HCT116 (cell line): ENCODE measurements at regions of chr2 and their contacts with region 1.

Region 1: GRCh38 chr2:6929196-6929819 is 12.1 kb downstream of the RNF144A start:
- DNase-seq: no peak
- ATAC-seq: no peak
- H3K4me3 ChIP-seq: no peak overlapping the region
- H3K27ac ChIP-seq: no peak overlapping the region
- H3K4me1 ChIP-seq: no peaks in the 10 kb centered on the region
- H3K27me3 ChIP-seq: no peaks in the 10 kb centered on the region
- CTCF ChIP-seq: no peak
- POLR2A ChIP-seq: no peak
- RAD21 ChIP-seq: no peak

Region 2: GRCh38 chr2:6750411-6751158 is 178.7 kb before region 1 on chr2:
- CTCF ChIA-PET with region 1: no interaction called
- POLR2A ChIA-PET with region 1: no interaction called
- RAD21 ChIA-PET with region 1: no interaction called
- intact Hi-C with region 1: no loop called
- DNase-seq: no peak
- ATAC-seq: no peak
- H3K4me3 ChIP-seq: no peak overlapping the region
- H3K27ac ChIP-seq: no peak overlapping the region
- H3K4me1 ChIP-seq: no peaks in the 10 kb centered on the region
- H3K27me3 ChIP-seq: peaks cover 2% of the 10 kb centered on the region; the same call in 1 of the 2 replicates
- CTCF ChIP-seq: no peak
- POLR2A ChIP-seq: no peak
- RAD21 ChIP-seq: no peak

Region 3: DNA sequence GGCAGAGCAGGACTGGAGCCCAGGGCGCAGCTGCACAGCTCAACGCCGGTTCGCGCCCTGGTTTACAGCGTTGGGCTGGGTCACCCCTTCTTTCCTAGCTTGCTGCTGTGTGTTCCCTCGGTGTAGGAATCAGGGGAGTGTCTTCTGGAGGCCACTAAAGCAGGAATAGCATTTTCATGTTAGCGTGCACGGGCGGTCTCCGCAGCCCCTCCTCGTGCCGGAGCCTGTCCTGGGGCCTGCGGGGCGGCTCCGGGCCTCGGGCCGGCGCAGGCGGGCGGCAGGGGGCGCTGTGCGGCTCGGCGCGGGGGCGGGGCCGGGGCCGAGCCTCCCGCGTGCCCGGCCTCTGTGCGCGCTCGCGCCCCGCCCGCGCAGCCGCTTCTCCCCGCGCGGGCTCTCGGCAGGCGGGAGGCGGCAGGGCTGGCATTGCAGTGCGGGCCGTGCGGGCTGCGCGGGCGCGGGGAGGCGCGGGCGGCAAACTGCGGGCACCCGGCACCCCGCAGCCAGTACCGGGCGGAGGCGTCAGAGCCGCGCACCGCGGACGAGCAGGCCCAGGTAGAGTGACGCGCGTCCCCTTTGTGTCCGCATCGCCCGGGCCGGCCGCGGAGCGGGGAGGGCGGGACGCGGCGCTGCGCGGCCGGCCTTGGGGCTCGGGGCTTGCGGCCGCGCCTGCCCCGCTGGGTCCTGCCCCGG is 12.1 kb before region 1 on chr2 and contains the start of gene RNF144A:
- CTCF ChIA-PET with region 1: interaction called, 10 read pairs
- POLR2A ChIA-PET with region 1: no interaction called
- RAD21 ChIA-PET with region 1: no interaction called
- intact Hi-C with region 1: no loop called
- DNase-seq: no peak
- ATAC-seq: peak; percentile 90
- H3K4me3 ChIP-seq: peak within 1 kb of the TSS; percentile 36 to 49
- H3K27ac ChIP-seq: peak within 1 kb of the TSS; percentile 59; the same call in 1 of the 2 replicates
- H3K4me1 ChIP-seq: peaks cover 11 to 35% of the 10 kb centered on the region in 2 experiments; a peak in 3 of 4 replicates
- H3K27me3 ChIP-seq: no peaks in the 10 kb centered on the region
- CTCF ChIP-seq: peak in 2 of 3 experiments; percentile 29 to 35; a peak in 2 of 6 replicates
- POLR2A ChIP-seq: no peak
- RAD21 ChIP-seq: no peak
- total RNA-seq, gene RNF144A: 13.0 TPM

Region 4: DNA sequence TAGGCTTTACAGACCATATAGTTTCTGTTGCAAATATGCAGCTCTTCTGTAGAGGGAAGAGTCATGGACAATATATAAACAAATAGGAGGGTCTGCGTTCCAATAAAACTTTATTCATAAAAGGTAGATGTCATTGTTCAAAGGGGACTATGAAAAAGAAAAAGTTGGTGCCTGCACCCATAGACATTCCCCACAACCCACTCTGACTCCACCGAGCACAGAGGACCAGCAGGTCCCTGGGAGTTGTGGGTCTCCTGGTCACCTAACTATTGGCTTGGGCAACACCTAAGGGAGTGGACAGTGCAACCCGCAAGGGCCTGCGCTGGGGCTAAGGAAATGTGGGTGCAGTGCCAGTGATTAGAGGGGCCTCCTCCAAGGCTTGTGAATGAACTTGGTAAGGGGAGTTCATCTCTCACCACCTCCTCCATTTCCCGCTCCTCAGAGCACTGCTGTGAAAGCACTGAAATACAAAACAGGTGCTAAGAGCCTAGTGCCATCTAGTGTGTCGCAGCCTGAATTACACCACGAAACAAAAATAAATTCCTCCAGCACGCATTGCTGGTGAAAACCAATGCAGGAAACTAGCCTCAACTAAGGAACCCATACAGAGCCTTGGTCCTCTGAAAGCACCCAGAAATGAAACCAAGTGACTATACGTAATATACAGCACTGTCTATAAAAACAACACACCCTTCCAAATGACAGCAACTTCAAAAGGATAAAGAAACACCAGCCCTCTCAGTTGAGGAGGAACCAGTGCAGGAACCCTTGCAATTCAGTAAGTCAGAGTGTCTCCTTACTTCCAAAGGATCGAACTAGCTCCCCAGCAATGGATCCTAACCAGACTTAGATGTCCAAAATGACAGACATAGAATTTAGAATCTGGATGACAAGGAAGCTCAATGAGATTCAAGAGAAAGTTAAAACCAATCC is 154.5 kb after region 1 on chr2:
- CTCF ChIA-PET with region 1: no interaction called
- POLR2A ChIA-PET with region 1: no interaction called
- RAD21 ChIA-PET with region 1: no interaction called
- intact Hi-C with region 1: no loop called
- DNase-seq: peak; percentile 32
- ATAC-seq: peak; percentile 95
- H3K4me3 ChIP-seq: no peak overlapping the region
- H3K27ac ChIP-seq: no peak overlapping the region
- H3K4me1 ChIP-seq: no peaks in the 10 kb centered on the region
- H3K27me3 ChIP-seq: no peaks in the 10 kb centered on the region
- CTCF ChIP-seq: peak; percentile 72 to 78 (median 72)
- POLR2A ChIP-seq: no peak
- RAD21 ChIP-seq: peak; percentile 75